ENCODE measurements at regions of chr18 and their contacts with region 1.

Region 1: DNA sequence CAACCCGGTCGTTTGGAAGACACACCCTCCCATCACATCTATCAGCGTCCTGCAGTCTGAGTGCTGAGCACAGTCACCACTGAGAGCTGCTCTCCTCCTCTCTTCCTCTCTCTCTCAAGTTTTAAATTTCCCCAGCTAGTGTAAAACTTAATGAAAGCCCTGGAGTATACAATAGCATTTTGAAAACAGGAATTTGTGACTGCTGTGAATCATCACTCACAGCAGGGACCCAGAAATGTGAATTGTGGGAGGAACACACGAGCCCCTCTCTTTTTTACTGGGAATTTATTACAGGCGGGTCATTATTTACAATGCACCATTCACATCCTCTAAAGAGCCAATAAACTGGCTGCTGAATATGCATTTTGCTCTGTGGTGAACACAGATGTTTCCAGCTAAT is 185.0 kb upstream of the SMIM21 start:
- DNase-seq: no peak
- ATAC-seq: no peak
- H3K4me3 ChIP-seq: no peak overlapping the region
- H3K27ac ChIP-seq: no peak overlapping the region
- H3K4me1 ChIP-seq: no peaks in the 10 kb centered on the region
- H3K27me3 ChIP-seq: no peaks in the 10 kb centered on the region
- CTCF ChIP-seq: no peak
- POLR2A ChIP-seq: no peak
- RAD21 ChIP-seq: no peak

Region 2: GRCh38 chr18:75656035-75656434 is 43.6 kb after region 1 on chr18:
- CTCF ChIA-PET with region 1: no interaction called
- POLR2A ChIA-PET with region 1: no interaction called
- dilution Hi-C with region 1: no loop called
- in situ Hi-C with region 1: no loop called
- intact Hi-C with region 1: loop called (anchors 1 kb)
- DNase-seq: no peak
- ATAC-seq: no peak
- H3K4me3 ChIP-seq: no peak overlapping the region
- H3K27ac ChIP-seq: no peak overlapping the region
- H3K4me1 ChIP-seq: no peaks in the 10 kb centered on the region
- H3K27me3 ChIP-seq: no peaks in the 10 kb centered on the region; the same call in none of the 2 replicates
- CTCF ChIP-seq: no peak
- POLR2A ChIP-seq: no peak
- RAD21 ChIP-seq: no peak